ENCODE measurements at regions of chr18 and their contacts with region 1.

Region 1: DNA sequence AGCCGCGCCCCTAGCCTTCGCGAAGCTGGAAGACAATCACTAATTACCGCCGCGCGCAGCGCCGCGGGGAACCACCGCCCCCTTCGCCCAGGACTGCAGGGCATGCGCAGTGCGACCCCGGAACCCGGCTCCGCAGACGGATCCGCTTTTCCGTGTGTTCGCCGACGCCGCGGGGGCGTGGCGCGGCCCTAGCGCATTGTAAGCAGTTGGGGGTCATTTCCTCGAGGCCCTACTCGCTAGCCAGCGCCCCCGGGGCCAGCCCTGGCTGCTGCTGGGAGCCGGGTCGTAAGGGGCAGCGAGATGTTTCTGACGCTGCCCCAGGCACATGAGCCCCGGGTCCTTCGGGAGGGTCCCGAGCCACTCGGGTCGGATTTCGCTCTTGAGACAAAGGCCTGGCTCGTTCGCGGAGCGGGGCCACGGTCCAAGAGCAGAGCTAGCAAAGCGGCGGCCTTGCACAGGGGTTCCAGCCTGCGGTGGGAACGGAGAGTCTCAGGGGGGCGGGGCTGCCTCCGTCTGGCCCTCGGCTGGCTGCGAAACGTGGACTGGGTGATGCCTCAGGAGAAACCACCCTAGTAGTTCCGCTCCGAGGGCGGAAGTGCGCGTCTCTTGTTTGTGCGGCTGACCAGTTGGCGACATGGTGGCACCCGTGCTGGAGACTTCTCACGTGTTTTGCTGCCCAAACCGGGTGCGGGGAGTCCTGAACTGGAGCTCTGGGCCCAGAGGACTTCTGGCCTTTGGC is at the starts of genes ELP2 and SLC39A6:
- DNase-seq: peak; percentile 94
- H3K4me3 Mint-ChIP-seq: peak within 1 kb of the TSS; percentile 91
- H3K27ac Mint-ChIP-seq: peak within 1 kb of the TSS; percentile 92
- H3K4me1 Mint-ChIP-seq: peaks cover 61% of the 10 kb centered on the region
- H3K27me3 Mint-ChIP-seq: no peaks in the 10 kb centered on the region
- total RNA-seq, gene ELP2: 90.1 to 92.0 TPM
- total RNA-seq, gene SLC39A6: 15.4 to 15.7 TPM

Region 2: GRCh38 chr18:35343936-35344735 is 785.3 kb before region 1 on chr18 and contains the start of gene ZNF24:
- CTCF ChIA-PET with region 1: no interaction called
- intact Hi-C with region 1: loop called (anchors 1 kb)
- DNase-seq: peak; percentile 94
- H3K4me3 Mint-ChIP-seq: peak within 1 kb of the TSS; percentile 92
- H3K27ac Mint-ChIP-seq: peak within 1 kb of the TSS; percentile 92
- H3K4me1 Mint-ChIP-seq: peaks cover 43% of the 10 kb centered on the region
- H3K27me3 Mint-ChIP-seq: no peaks in the 10 kb centered on the region
- total RNA-seq, gene ZNF24: 46.8 to 47.8 TPM

Region 3: DNA sequence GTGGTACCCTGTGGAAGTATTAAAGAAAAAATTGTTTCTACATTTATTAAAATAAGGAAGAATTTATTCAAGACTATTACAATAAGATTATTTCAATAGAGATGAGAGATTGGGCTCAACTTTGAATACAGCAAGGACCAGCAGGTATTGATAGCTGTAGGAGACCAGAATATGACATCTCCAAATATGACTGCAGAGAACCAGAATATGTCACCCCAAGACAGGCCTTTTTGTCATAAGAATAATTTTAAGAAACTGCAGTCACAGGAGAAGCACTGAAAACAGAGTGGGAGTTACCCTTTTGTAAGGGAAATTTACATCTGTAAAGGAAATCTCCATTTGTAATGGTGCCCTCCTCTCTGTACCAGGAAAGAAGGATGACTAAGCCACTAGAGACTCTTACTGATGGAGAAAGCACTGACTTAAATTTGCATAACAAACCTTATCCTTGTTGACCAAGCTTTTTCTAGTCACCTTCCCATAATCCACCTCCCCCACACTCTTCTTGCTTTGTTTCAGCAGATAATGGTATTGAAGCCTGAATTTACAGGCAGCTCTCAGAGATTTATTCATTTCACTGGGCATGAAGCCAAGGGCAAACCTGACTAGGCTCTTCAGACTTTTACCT is 302.1 kb before region 1 on chr18:
- CTCF ChIA-PET with region 1: no interaction called
- intact Hi-C with region 1: loop called (anchors 1 kb)
- DNase-seq: peak; percentile 62
- H3K4me3 Mint-ChIP-seq: no peak overlapping the region
- H3K27ac Mint-ChIP-seq: peak overlapping the region; percentile 75
- H3K4me1 Mint-ChIP-seq: peaks cover 15% of the 10 kb centered on the region
- H3K27me3 Mint-ChIP-seq: peaks cover 22% of the 10 kb centered on the region

Region 4: GRCh38 chr18:36066686-36067054 is 62.8 kb before region 1 on chr18:
- CTCF ChIA-PET with region 1: no interaction called
- intact Hi-C with region 1: loop called (anchors 1 kb)
- DNase-seq: no peak
- H3K4me3 Mint-ChIP-seq: peak overlapping the region; percentile 90
- H3K27ac Mint-ChIP-seq: peak overlapping the region; percentile 90
- H3K4me1 Mint-ChIP-seq: peaks cover 36% of the 10 kb centered on the region
- H3K27me3 Mint-ChIP-seq: no peaks in the 10 kb centered on the region

Region 5: DNA sequence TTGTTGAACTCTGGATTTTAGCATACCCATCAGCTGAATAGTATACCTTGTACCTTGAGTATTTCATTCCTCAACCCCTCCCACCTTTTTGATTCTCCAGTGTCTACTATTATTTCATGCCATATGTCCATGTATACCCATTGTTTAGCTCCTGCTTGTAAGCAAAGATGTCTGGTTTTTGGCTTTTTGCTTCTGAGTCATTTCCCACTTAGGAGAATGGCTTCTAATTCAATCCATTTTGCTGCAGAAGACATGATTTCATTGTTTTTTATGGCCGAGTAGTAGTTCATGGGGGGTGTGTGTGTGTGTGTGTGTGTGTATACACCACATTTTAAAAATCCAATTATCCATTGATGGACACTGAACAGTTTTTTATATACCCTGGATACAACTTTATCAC is 33.5 kb after region 1 on chr18:
- CTCF ChIA-PET with region 1: no interaction called
- intact Hi-C with region 1: loop called (anchors 5 kb)
- DNase-seq: no peak
- H3K4me3 Mint-ChIP-seq: no peak overlapping the region
- H3K27ac Mint-ChIP-seq: no peak overlapping the region
- H3K4me1 Mint-ChIP-seq: peaks cover 16% of the 10 kb centered on the region
- H3K27me3 Mint-ChIP-seq: no peaks in the 10 kb centered on the region

Region 6: GRCh38 chr18:36284671-36285295 is 155.3 kb after region 1 on chr18:
- CTCF ChIA-PET with region 1: no interaction called
- intact Hi-C with region 1: loop called (anchors 1 kb)
- DNase-seq: peak; percentile 55
- H3K4me3 Mint-ChIP-seq: no peak overlapping the region
- H3K27ac Mint-ChIP-seq: no peak overlapping the region
- H3K4me1 Mint-ChIP-seq: no peaks in the 10 kb centered on the region
- H3K27me3 Mint-ChIP-seq: peaks cover 14% of the 10 kb centered on the region

Region 7: DNA sequence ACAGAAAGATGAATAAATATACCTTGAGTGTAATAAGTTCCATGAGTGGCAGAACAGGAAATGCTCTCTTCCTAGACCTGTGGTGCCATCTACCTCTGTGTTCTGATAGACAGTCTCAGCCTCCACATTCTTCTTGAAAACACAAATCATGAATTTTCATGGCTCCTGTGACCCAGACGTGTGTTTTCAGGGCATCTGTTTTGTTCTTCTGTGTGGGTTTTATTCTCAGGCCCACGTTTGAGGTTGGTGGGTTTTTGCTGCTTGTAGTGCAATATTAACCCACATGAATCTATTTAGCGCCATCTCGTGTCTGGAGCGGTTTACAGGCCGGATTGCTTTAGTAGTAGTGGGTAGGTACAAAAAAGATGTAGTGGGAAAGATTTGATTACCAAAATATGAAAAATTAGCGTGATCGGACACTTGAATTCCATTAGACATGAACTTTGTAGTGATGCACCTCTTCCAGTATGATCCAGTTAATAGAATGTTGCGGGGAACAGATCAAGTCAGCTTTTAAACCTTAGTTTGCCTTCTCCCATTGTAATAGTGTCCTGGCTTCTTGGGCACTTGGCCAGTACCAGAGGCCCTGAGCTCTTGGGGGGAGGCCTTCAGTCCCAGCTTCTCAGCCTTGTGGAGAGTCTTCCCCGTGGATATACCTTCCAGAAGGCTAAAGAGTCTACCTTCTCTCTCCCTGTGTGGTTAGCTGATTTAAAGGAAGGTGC is 442.8 kb after region 1 on chr18:
- CTCF ChIA-PET with region 1: no interaction called
- intact Hi-C with region 1: no loop called
- DNase-seq: peak; percentile 50
- H3K4me3 Mint-ChIP-seq: no peak overlapping the region
- H3K27ac Mint-ChIP-seq: no peak overlapping the region
- H3K4me1 Mint-ChIP-seq: no peaks in the 10 kb centered on the region
- H3K27me3 Mint-ChIP-seq: peaks cover 8% of the 10 kb centered on the region